ENCODE measurements at regions of chr1 and their contacts with region 1.

Region 1: DNA sequence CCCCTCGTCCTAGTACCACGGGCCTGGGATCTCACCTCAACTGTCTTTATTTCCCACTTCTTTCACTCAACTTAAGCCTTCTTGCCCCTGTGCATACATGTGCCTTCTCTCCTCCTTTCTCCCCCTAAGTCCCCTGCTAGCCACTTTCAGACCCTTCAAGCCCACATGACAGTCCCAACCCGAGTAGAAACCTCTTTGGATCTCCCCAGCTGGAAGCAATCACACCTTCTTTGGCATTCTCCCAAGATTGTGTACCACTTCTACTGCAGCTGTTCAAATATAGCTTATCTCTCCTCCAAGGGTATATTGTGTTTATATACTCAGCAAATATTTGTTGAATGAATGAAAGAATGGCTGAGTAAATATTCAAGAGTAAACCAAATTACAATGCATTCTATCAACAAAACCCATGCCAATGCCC is 68.8 kb downstream of the NIBAN1 start:
- DNase-seq: no peak
- ATAC-seq: peak in 5 of 8 donors; percentile 12 to 31 (median 17)
- H3K4me3 ChIP-seq: no peak overlapping the region
- H3K27ac ChIP-seq: peak overlapping the region in 6 of 10 donors; percentile 9 to 60 (median 22)
- H3K4me1 ChIP-seq: peaks cover 4 to 89% (median 66%) of the 10 kb centered on the region in 9 donors
- H3K27me3 ChIP-seq: no peaks in the 10 kb centered on the region
- CTCF ChIP-seq: no peak

Region 2: GRCh38 chr1:184929711-184930631 is 24.5 kb after region 1 on chr1:
- intact Hi-C with region 1: no loop called
- DNase-seq: no peak
- ATAC-seq: peak in 3 of 8 donors; percentile 21 to 52 (median 26)
- H3K4me3 ChIP-seq: no peak overlapping the region
- H3K27ac ChIP-seq: peak overlapping the region in 2 of 10 donors; percentile 21 to 49
- H3K4me1 ChIP-seq: peaks cover 0 to 54% (median 33%) of the 10 kb centered on the region in 9 donors
- H3K27me3 ChIP-seq: no peaks in the 10 kb centered on the region
- CTCF ChIP-seq: no peak

Region 3: GRCh38 chr1:184941735-184942134 is 36.3 kb after region 1 on chr1:
- intact Hi-C with region 1: loop called in 1 of 10 experiments (anchors 5 kb)
- DNase-seq: no peak
- ATAC-seq: no peak
- H3K4me3 ChIP-seq: no peak overlapping the region
- H3K27ac ChIP-seq: no peak overlapping the region
- H3K4me1 ChIP-seq: peaks cover 0 to 77% (median 59%) of the 10 kb centered on the region in 9 donors
- H3K27me3 ChIP-seq: no peaks in the 10 kb centered on the region
- CTCF ChIP-seq: no peak

Region 4: GRCh38 chr1:185652348-185652747 is 746.9 kb after region 1 on chr1:
- intact Hi-C with region 1: no loop called
- DNase-seq: no peak
- ATAC-seq: no peak
- H3K4me3 ChIP-seq: no peak overlapping the region
- H3K27ac ChIP-seq: peak overlapping the region in 2 of 10 donors; percentile 11 to 83
- H3K4me1 ChIP-seq: peaks cover 0 to 15% (median 2%) of the 10 kb centered on the region in 9 donors
- H3K27me3 ChIP-seq: no peaks in the 10 kb centered on the region
- CTCF ChIP-seq: peak in 3 of 9 donors; percentile 22 to 27 (median 23)

Measured in heart right ventricle (tissue), 16 donors.